ENCODE measurements at regions of chr12 and their contacts with region 1.

Region 1: GRCh38 chr12:1661553-1662335 is 29.1 kb upstream of the ADIPOR2 start:
- DNase-seq: peak; percentile 57
- H3K4me3 ChIP-seq: peak overlapping the region; percentile 53
- CTCF ChIP-seq: no peak

Region 2: GRCh38 chr12:1650260-1650977 is 11.3 kb before region 1 on chr12:
- CTCF ChIA-PET with region 1: interaction called, 39 read pairs
- POLR2A ChIA-PET with region 1: interaction called, 3 read pairs
- DNase-seq: no peak
- H3K4me3 ChIP-seq: no peak overlapping the region
- CTCF ChIP-seq: no peak

Measured in AG04449 (cell line).